AG04450 (cell line): ENCODE measurements at regions of chr16 and their contacts with region 1.

Region 1: DNA sequence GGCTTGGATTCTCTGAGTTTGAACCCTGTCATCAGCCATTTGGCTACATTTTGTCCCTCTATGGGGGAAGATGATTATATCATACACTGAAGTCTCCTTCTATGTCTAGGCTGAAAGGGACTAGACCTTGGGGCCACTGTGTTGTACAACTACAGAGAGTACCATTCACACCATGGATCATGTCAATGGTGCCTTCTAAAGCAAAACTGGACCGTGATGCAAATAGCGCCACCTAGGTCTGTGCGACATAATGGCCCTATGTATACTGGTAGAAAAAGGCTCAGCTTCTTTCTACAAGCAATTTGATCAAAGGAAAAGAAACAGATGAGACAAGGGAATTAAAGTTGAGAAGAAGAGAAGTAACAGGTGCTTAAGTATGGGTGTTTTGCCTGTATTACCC is 100.7 kb downstream of the LYRM1 start:
- DNase-seq: no peak
- H3K4me3 ChIP-seq: no peak overlapping the region
- H3K27ac ChIP-seq: no peak overlapping the region
- H3K27me3 ChIP-seq: peaks cover 2% of the 10 kb centered on the region
- CTCF ChIP-seq: peak; percentile 44

Region 2: DNA sequence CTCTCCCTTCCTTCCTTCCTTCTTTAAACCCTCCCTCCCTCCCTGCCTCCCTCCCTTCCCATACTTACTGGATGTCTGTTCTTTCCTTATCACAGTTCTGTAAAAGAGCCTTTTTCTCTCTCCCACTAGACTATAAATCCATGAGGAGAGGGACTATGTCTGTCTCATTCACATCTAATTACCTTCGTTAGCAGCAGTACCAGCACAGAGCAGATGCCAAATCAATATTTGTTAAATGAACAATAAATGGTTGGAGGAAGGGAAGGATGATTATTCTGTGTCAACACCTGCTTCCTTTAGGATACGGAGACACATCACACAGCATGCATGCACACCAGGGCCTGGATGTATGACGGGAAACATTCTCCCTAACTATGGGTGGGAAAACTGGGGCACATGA is 55.1 kb after region 1 on chr16:
- CTCF ChIA-PET with region 1: no interaction called
- POLR2A ChIA-PET with region 1: interaction called, 17 read pairs
- DNase-seq: no peak
- H3K4me3 ChIP-seq: no peak overlapping the region
- H3K27ac ChIP-seq: no peak overlapping the region
- H3K27me3 ChIP-seq: no peaks in the 10 kb centered on the region
- CTCF ChIP-seq: no peak

Region 3: GRCh38 chr16:21150375-21151001 is 149.2 kb after region 1 on chr16 and contains the start of gene DNAH3:
- CTCF ChIA-PET with region 1: no interaction called
- POLR2A ChIA-PET with region 1: no interaction called
- DNase-seq: no peak
- H3K4me3 ChIP-seq: no peak within 1 kb of the TSS
- H3K27ac ChIP-seq: no peak within 1 kb of the TSS
- H3K27me3 ChIP-seq: peaks cover 11% of the 10 kb centered on the region
- CTCF ChIP-seq: no peak
- polyA plus RNA-seq, gene DNAH3: not detected in 2 replicates